AG04449 (cell line): ENCODE measurements at regions of chr4 and their contacts with region 1.

Region 1: GRCh38 chr4:152850377-152850776 is 70.6 kb downstream of the ARFIP1 start:
- DNase-seq: no peak
- H3K4me3 ChIP-seq: no peak overlapping the region
- CTCF ChIP-seq: no peak

Region 2: GRCh38 chr4:152831416-152831815 is 19.0 kb before region 1 on chr4:
- CTCF ChIA-PET with region 1: interaction called, 11 read pairs
- POLR2A ChIA-PET with region 1: no interaction called
- DNase-seq: no peak
- H3K4me3 ChIP-seq: no peak overlapping the region
- CTCF ChIP-seq: no peak

Region 3: DNA sequence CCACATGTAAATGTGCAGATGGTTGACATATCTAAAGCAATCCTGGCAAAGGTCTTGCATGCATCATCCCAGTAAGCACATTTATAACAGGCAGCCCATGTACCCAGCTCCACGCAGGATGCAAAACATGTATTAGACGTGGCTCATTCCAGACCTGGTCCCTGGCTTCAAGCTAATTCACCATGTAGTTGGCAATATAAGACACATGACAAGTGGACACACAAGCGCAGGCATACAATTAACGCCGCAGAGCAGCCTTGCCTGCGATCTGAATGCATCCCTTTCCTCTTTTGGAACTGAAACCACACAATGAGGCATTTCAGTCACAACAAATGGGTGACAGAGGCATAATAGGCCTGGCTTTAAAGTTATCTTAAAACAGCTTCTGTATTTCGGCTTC is 239.4 kb after region 1 on chr4:
- CTCF ChIA-PET with region 1: interaction called, 64 read pairs
- POLR2A ChIA-PET with region 1: no interaction called
- DNase-seq: no peak
- H3K4me3 ChIP-seq: no peak overlapping the region
- CTCF ChIP-seq: no peak

Region 4: GRCh38 chr4:153107246-153107645 is 256.9 kb after region 1 on chr4:
- CTCF ChIA-PET with region 1: no interaction called
- POLR2A ChIA-PET with region 1: no interaction called
- DNase-seq: no peak
- H3K4me3 ChIP-seq: no peak overlapping the region
- CTCF ChIP-seq: no peak